ENCODE measurements at regions of chr12 and their contacts with region 1.

Region 1: DNA sequence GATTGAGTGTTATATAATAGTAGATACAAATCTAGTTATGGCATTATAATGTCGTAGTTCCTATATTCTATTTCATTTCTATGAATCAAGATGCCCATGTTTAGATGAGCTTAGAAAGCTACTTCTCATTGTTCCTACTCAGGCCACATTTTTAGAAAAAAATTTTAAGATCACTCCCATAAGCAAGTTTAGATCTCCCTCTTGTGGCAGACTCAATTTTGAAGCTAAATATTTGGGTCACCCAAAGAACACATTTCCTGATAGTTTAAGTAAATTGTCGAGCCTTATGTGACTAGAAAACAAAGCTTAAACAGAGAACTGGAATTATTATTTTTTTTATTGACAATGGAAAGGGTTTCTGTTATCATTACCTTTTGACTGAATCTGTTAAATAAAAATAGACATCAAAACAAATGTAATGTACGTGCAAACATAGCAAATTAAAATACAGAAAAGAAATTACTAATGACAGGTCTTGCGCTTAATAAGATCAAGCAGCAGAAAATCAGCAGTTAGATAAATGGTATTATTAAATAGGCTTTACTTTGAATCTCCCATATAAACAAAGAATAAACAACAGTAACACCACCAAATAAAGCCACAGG is 180.2 kb downstream of the ACSS3 start:
- DNase-seq: peak; percentile 84
- H3K4me3 ChIP-seq: no peak overlapping the region
- H3K27ac ChIP-seq: no peak overlapping the region
- H3K4me1 ChIP-seq: peaks cover 32% of the 10 kb centered on the region
- H3K27me3 ChIP-seq: no peaks in the 10 kb centered on the region
- CTCF ChIP-seq: peak; percentile 78

Region 2: DNA sequence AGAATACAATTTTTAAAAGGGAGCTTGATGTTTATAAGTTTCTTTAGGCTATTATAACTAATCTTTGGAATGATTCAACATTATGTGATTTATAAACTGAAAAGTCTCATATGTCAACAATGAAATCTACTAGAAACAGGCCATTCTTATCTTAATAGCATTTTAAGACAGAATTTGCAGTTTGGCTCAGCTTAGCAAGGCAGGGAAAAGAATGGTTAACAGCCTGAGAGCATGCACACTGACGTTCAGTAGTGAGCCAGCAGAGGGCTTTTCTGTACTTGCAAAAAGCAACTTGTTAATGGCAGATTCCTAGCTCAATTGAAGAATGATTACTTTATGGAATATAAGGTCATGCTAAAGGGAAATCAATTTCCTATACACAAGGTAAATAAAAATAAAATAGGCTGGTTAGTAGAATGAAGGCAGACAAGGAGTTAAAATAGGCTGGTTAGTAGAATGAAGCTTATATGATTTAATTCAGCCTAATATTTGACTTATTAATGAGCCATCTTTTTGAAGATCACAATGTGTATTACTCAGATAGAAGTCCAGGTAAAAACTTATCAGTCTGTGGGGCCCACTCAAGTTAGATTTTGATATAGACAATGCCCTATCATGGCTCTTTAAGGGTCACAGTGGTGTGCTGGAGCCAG is 1062.8 kb before region 1 on chr12:
- CTCF ChIA-PET with region 1: interaction called, 17 read pairs
- POLR2A ChIA-PET with region 1: no interaction called
- intact Hi-C with region 1: loop called (anchors 5 kb)
- DNase-seq: peak; percentile 76
- H3K4me3 ChIP-seq: no peak overlapping the region
- H3K27ac ChIP-seq: no peak overlapping the region
- H3K4me1 ChIP-seq: no peaks in the 10 kb centered on the region
- H3K27me3 ChIP-seq: no peaks in the 10 kb centered on the region
- CTCF ChIP-seq: peak; percentile 80

Region 3: DNA sequence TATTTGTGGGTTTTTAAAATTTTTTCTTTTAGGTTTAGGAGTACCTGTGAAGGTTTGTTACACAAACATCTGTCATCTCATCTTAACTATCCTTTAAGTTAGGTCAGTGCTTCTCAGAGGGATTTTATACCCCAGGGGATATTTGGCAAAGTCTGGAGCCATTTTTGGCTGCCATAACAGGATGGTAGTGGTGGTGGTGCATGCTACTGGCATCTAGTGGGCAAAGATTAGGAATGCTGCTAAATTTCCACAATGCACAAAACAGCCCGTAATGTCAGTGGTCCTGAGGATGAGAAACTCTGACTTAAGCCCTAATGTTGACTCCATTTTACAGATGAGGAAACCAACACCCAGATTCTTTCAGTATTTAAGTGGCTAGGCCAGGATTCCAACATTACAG is 635.8 kb before region 1 on chr12:
- CTCF ChIA-PET with region 1: no interaction called
- POLR2A ChIA-PET with region 1: no interaction called
- intact Hi-C with region 1: loop called (anchors 10 kb)
- DNase-seq: peak; percentile 83
- H3K4me3 ChIP-seq: no peak overlapping the region
- H3K27ac ChIP-seq: no peak overlapping the region
- H3K4me1 ChIP-seq: peaks cover 3% of the 10 kb centered on the region
- H3K27me3 ChIP-seq: no peaks in the 10 kb centered on the region
- CTCF ChIP-seq: peak; percentile 66

Region 4: DNA sequence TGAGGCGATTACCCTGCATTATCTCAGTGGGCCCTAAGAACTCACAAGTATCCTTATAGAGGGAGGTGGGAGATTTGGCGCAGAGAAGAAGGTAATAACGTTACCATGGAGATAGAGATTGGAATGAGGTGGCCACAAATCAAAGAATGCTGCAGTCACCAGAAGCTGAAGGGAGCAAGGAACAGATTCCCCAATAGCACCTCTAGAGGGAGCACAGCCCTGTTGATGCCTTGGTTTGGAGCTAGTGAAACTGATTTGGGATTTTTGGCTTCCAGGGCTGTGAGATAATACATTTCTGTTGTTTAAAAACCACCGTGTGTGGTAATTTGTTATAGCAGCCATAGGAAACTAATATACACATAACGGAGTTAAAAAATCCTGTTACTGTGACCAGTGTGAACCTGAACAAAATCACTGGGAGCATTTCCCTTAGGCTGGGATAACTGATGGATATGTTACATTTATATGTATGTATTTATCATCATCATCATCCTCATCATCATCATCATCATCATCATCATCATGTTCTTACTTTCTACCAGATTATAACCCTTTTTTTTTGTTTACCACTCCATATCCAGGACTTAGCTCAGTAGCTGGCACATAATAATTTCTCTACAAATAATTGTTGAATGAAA is 420.6 kb before region 1 on chr12:
- CTCF ChIA-PET with region 1: interaction called, 10 read pairs
- POLR2A ChIA-PET with region 1: no interaction called
- intact Hi-C with region 1: loop called (anchors 5 kb)
- DNase-seq: peak; percentile 82
- H3K4me3 ChIP-seq: no peak overlapping the region
- H3K27ac ChIP-seq: no peak overlapping the region
- H3K4me1 ChIP-seq: peaks cover 6% of the 10 kb centered on the region
- H3K27me3 ChIP-seq: no peaks in the 10 kb centered on the region
- CTCF ChIP-seq: peak; percentile 88

Region 5: GRCh38 chr12:81147292-81147919 is 110.6 kb before region 1 on chr12:
- CTCF ChIA-PET with region 1: no interaction called
- POLR2A ChIA-PET with region 1: no interaction called
- intact Hi-C with region 1: loop called (anchors 10 kb)
- DNase-seq: no peak
- H3K4me3 ChIP-seq: no peak overlapping the region
- H3K27ac ChIP-seq: no peak overlapping the region
- H3K4me1 ChIP-seq: no peaks in the 10 kb centered on the region
- H3K27me3 ChIP-seq: no peaks in the 10 kb centered on the region
- CTCF ChIP-seq: 0 out of 2 replicates have a peak, but pooled peaks have one; percentile 23

Region 6: DNA sequence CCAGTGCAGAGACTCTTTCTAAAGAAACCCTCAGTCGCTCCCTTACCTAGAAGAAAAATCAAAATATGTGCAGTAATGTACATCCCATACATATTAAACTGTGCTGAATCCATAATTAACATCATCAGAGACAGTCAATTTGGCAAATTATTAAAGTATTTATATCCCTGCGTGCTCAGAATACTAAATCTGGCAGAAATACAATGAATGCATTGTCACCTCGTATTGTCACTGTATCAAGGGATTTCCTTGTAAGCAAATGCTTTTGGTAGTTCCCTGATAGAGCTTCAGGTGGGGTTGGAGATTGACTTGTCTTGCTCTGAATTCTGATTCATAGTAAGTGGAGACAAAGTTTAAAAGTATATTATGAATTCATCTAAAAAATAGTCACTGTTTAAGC is 182.0 kb after region 1 on chr12:
- CTCF ChIA-PET with region 1: no interaction called
- POLR2A ChIA-PET with region 1: no interaction called
- intact Hi-C with region 1: no loop called
- DNase-seq: no peak
- H3K4me3 ChIP-seq: no peak overlapping the region
- H3K27ac ChIP-seq: no peak overlapping the region
- H3K4me1 ChIP-seq: no peaks in the 10 kb centered on the region
- H3K27me3 ChIP-seq: no peaks in the 10 kb centered on the region
- CTCF ChIP-seq: no peak

Region 7: DNA sequence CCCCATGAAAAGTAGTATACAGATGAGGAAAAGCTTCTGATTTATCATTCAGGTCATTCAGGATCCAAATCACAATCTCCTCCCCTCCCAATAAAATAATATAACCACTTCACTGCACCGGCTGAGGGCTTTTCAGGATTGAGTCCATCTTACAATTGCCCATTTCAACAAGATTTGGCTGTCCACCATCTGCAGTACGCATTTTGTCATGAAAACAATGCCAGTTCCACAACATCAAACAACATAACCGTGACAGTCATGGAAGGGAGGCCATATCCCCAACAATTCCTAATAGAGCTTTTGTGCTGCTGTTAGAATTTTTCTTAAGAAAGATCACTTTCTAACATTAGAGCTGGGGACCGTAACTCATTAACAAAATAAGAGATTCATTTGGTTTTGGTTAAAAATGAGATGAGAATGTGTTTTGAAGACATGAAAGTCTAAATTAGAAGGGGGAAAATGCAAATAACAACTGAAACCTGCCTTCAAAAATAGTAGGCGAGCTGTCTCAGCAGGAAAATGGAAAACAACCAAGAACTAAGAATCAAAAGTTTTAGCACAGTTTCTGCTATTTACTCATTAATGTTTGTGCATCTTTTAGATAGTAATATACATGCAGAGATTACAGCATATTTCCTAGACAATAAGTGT is 1390.3 kb after region 1 on chr12:
- CTCF ChIA-PET with region 1: no interaction called
- POLR2A ChIA-PET with region 1: no interaction called
- intact Hi-C with region 1: no loop called
- DNase-seq: no peak
- H3K4me3 ChIP-seq: no peak overlapping the region
- H3K27ac ChIP-seq: no peak overlapping the region
- H3K4me1 ChIP-seq: peaks cover 8% of the 10 kb centered on the region
- H3K27me3 ChIP-seq: no peaks in the 10 kb centered on the region
- CTCF ChIP-seq: no peak

Measured in A673 (cell line).